ENCODE measurements at regions of chr10 and their contacts with region 1.

Region 1: GRCh38 chr10:112434988-112435619 is 11.6 kb downstream of the ZDHHC6 start:
- DNase-seq: no peak
- ATAC-seq: no peak
- H3K4me3 Mint-ChIP-seq: no peak overlapping the region
- H3K27ac Mint-ChIP-seq: no peak overlapping the region
- H3K4me1 Mint-ChIP-seq: no peaks in the 10 kb centered on the region
- H3K27me3 Mint-ChIP-seq: no peaks in the 10 kb centered on the region
- CTCF ChIP-seq: no peak

Region 2: GRCh38 chr10:112115799-112116385 is 319.2 kb before region 1 on chr10:
- CTCF ChIA-PET with region 1: interaction called, 4 read pairs
- POLR2A ChIA-PET with region 1: no interaction called
- intact Hi-C with region 1: loop called (anchors 2 kb)
- DNase-seq: no peak
- ATAC-seq: peak; percentile 54
- H3K4me3 Mint-ChIP-seq: no peak overlapping the region
- H3K27ac Mint-ChIP-seq: no peak overlapping the region
- H3K4me1 Mint-ChIP-seq: no peaks in the 10 kb centered on the region
- H3K27me3 Mint-ChIP-seq: no peaks in the 10 kb centered on the region
- CTCF ChIP-seq: no peak

Measured in activated B cell treated with CpG ODN at 0.5 μM for 24 hours (primary cell).